ENCODE measurements at regions of chr22 and their contacts with region 1.

Region 1: GRCh38 chr22:38016182-38017078 is 32.1 kb upstream of the SOX10 start:
- DNase-seq: peak in 1 of 2 experiments; percentile 51
- H3K4me3 ChIP-seq: no peak overlapping the region
- H3K27ac ChIP-seq: no peak overlapping the region
- H3K4me1 ChIP-seq: no peaks in the 10 kb centered on the region
- H3K27me3 ChIP-seq: no peaks in the 10 kb centered on the region
- CTCF ChIP-seq: no peak

Region 2: GRCh38 chr22:38935023-38935422 is 918.6 kb after region 1 on chr22:
- CTCF ChIA-PET with region 1: no interaction called
- POLR2A ChIA-PET with region 1: interaction called, 14 read pairs
- intact Hi-C with region 1: no loop called
- DNase-seq: peak; percentile 89 to 95
- H3K4me3 ChIP-seq: no peak overlapping the region
- H3K27ac ChIP-seq: no peak overlapping the region
- H3K4me1 ChIP-seq: peaks cover 34% of the 10 kb centered on the region
- H3K27me3 ChIP-seq: no peaks in the 10 kb centered on the region
- CTCF ChIP-seq: no peak

Measured in PC-9 (cell line).